Transverse colon (tissue), 4 donors: ENCODE measurements at regions of chr18 and their contacts with region 1.

Region 1: DNA sequence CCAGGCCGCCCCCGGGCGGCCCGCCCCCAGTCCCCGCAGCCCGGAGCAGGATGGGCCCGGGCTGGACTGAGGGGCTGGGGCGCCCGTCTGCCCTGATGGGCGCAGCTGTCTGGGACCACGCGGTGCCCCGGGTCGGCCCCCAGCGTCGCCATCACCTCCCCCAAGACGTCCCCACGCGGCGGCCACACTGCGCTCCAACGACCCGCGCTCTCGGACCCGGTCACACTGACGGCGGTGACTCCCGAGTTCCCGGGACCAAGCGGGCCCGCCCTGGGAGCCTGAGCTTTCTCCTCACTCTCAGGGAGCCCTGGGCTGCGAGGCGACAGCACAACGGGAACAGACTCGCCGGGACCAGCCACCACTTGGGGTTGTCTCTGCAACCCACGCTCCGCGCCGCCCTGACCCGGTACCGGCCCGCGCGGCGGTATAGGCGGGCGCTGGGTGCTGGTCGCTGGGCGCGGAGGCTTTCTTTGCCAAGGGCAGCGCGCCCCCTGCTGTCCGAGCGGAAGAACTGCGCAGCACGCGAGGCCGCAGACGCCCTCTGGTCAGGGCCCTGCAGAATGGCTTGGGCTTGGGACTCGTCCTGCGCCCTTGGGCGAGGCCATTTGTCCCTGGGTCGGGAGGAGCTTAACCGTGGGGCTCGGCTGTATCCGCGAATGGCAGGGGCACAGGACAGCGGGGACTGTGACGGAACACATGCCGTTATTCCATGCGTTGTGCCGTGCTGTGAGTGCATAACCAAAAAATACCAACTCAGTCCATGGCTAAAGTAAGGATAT is 54.8 kb upstream of the ANKRD62 start:
- DNase-seq: peak; percentile 89
- H3K4me3 ChIP-seq: peak overlapping the region; percentile 3 to 65 (median 43)
- H3K27ac ChIP-seq: peak overlapping the region in 3 of 4 donors; percentile 4 to 36 (median 33)
- H3K4me1 ChIP-seq: peaks cover 0 to 12% (median 10%) of the 10 kb centered on the region in 4 donors
- H3K27me3 ChIP-seq: no peaks in the 10 kb centered on the region
- CTCF ChIP-seq: peak; percentile 98 to 99 (median 98)
- EP300 ChIP-seq: no peak
- POLR2A ChIP-seq: no peak

Region 2: GRCh38 chr18:11204020-11204419 is 834.8 kb before region 1 on chr18:
- in situ Hi-C with region 1: no loop called
- intact Hi-C with region 1: no loop called
- DNase-seq: no peak
- H3K4me3 ChIP-seq: no peak overlapping the region
- H3K27ac ChIP-seq: no peak overlapping the region
- H3K4me1 ChIP-seq: no peaks in the 10 kb centered on the region
- H3K27me3 ChIP-seq: no peaks in the 10 kb centered on the region
- CTCF ChIP-seq: no peak
- EP300 ChIP-seq: no peak
- POLR2A ChIP-seq: no peak

Region 3: GRCh38 chr18:11733031-11733430 is 305.8 kb before region 1 on chr18:
- in situ Hi-C with region 1: loop called (anchors 10 to 25 kb)
- intact Hi-C with region 1: no loop called
- DNase-seq: peak; percentile 81
- H3K4me3 ChIP-seq: peak overlapping the region in 1 of 4 donors; percentile 31
- H3K27ac ChIP-seq: no peak overlapping the region
- H3K4me1 ChIP-seq: peaks cover 0 to 7% (median 0%) of the 10 kb centered on the region in 4 donors
- H3K27me3 ChIP-seq: peaks cover 4% of the 10 kb centered on the region
- CTCF ChIP-seq: peak; percentile 84 to 92 (median 90)
- EP300 ChIP-seq: no peak
- POLR2A ChIP-seq: no peak